Mammary epithelial cell (primary cell): ENCODE measurements at regions of chr15 and their contacts with region 1.

Region 1: DNA sequence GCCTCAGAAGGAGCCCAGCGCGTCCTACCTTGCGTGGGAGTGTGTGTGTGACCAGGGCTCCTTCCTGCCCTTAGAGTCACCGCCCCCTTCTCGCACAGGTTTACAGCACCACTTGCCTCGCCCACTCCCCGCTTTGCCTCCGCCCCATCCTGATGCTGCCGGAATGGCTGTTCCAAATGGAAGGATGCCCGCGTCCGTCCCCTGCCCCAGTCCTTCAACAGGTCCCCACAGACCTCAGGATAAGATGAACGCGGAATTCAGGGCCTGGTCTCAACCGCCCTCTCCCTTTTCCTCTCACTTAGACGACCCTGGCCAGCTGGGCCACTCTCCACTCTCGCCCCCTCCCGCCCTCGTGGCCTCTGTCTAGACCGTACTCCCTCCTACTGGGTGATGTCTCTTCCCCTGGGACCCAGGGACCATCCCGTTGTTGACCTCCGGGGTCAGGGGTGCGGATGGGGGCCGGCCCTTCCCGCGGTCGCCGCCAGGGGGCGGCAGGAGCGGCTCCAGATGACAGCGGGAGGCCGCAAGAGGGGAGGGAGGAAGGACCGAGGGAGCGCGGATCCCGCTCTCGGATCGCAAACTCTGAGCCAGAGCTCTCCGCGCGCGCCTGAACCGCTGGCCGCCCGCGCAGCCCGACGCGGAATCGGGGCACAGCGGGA is at the start of gene THSD4:
- DNase-seq: peak; percentile 66
- H3K4me3 ChIP-seq: peak within 1 kb of the TSS; percentile 71 to 75 (median 75)
- H3K27ac ChIP-seq: peak within 1 kb of the TSS; percentile 90
- H3K4me1 ChIP-seq: peaks cover 31% of the 10 kb centered on the region
- H3K27me3 ChIP-seq: no peaks in the 10 kb centered on the region
- CTCF ChIP-seq: peak; percentile 87 to 99
- total RNA-seq, gene THSD4: 87.7 to 111 TPM

Region 2: GRCh38 chr15:70974004-70974832 is 140.8 kb before region 1 on chr15:
- CTCF ChIA-PET with region 1: interaction called, 4 read pairs
- dilution Hi-C with region 1: no loop called
- in situ Hi-C with region 1: no loop called
- intact Hi-C with region 1: loop called (anchors 5 kb)
- DNase-seq: peak; percentile 36
- H3K4me3 ChIP-seq: no peak overlapping the region
- H3K27ac ChIP-seq: no peak overlapping the region
- H3K4me1 ChIP-seq: no peaks in the 10 kb centered on the region
- H3K27me3 ChIP-seq: no peaks in the 10 kb centered on the region
- CTCF ChIP-seq: peak; percentile 16 to 49

Region 3: GRCh38 chr15:71043361-71043760 is 71.7 kb before region 1 on chr15:
- CTCF ChIA-PET with region 1: no interaction called
- dilution Hi-C with region 1: no loop called
- in situ Hi-C with region 1: no loop called
- intact Hi-C with region 1: loop called (anchors 2 kb)
- DNase-seq: peak; percentile 95
- H3K4me3 ChIP-seq: no peak overlapping the region
- H3K27ac ChIP-seq: peak overlapping the region; percentile 89
- H3K4me1 ChIP-seq: peaks cover 31% of the 10 kb centered on the region
- H3K27me3 ChIP-seq: no peaks in the 10 kb centered on the region
- CTCF ChIP-seq: no peak

Region 4: GRCh38 chr15:71212146-71212545 is 97.1 kb after region 1 on chr15:
- CTCF ChIA-PET with region 1: no interaction called
- dilution Hi-C with region 1: loop called (anchors 5 kb)
- in situ Hi-C with region 1: no loop called
- intact Hi-C with region 1: no loop called
- DNase-seq: no peak
- H3K4me3 ChIP-seq: no peak overlapping the region
- H3K27ac ChIP-seq: no peak overlapping the region
- H3K4me1 ChIP-seq: no peaks in the 10 kb centered on the region
- H3K27me3 ChIP-seq: no peaks in the 10 kb centered on the region
- CTCF ChIP-seq: no peak

Region 5: DNA sequence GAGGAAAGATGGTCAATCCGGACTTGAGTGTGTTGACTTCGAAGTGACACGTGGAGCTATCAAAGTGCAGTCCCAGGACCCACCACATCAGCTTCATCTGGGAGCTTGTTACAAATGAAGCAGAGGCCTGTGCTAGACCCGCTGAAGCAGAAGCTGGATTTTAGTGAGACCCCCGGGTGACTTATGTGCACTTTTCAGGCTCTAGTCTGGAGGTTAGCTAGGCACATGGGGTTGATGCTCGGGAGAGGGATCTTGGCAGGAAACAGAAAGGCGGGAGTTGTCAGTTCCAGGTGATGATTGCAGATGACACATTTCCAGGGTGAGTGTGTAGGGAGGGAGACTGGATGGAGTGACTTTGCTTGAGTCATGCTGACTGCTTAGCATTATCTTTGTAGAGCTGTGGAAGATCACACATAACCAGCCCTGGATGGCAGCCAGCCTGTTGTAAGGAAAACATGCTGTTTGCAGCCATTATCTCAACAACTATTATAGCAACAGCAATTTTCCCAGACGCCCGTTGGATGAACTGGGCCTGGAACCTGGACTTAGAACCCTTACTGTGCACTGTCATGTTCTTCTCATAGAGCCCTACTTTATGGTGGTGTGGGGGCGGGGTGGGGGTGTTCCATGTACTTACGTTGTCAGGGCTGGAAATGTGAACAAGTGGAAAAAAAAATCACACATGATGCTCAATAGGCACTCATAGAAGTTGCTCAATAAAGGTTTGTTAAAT is 122.6 kb after region 1 on chr15:
- CTCF ChIA-PET with region 1: no interaction called
- dilution Hi-C with region 1: no loop called
- in situ Hi-C with region 1: no loop called
- intact Hi-C with region 1: loop called (anchors 2 kb)
- DNase-seq: peak; percentile 96
- H3K4me3 ChIP-seq: no peak overlapping the region
- H3K27ac ChIP-seq: peak overlapping the region; percentile 57
- H3K4me1 ChIP-seq: peaks cover 11% of the 10 kb centered on the region
- H3K27me3 ChIP-seq: no peaks in the 10 kb centered on the region
- CTCF ChIP-seq: no peak